Aorta (tissue), 5 donors: ENCODE measurements at regions of chr17 and their contacts with region 1.

Region 1: DNA sequence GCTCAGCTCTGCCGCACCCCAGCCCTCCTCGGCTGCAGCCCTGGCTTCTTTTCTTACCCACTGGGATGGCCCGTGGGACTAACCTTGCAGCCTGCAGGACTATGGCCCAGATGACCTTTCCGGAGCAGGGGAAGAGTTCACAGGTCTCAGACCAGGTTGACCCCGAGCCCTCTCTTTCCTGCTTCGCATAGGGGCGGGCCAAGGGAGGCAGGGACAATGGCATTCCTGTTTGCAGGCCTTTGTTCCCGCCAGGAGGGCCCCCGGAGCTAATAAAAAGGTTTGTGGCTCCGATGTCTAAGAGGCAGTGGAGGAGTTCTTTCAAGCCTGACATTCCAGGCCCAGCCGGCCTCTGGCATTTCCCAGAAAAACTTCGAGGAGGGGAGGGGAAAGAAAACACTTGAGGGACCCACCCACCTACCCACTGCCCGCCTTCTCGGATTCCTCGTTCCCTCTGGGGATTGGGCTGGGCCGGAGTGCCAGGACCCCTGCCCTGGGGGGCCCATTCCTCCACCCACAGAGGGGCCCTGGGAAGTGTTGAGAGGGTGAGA is 5.8 kb upstream of the SOCS3 start:
- DNase-seq: no peak
- ATAC-seq: no peak
- H3K4me3 ChIP-seq: no peak overlapping the region
- H3K27ac ChIP-seq: no peak overlapping the region
- H3K4me1 ChIP-seq: no peaks in the 10 kb centered on the region
- H3K27me3 ChIP-seq: no peaks in the 10 kb centered on the region

Region 2: GRCh38 chr17:78289802-78290363 is 75.8 kb before region 1 on chr17:
- intact Hi-C with region 1: loop called in 1 of 2 experiments (anchors 5 kb)
- DNase-seq: peak; percentile 88 to 91
- ATAC-seq: peak; percentile 90
- H3K4me3 ChIP-seq: no peak overlapping the region
- H3K27ac ChIP-seq: no peak overlapping the region
- H3K4me1 ChIP-seq: no peaks in the 10 kb centered on the region
- H3K27me3 ChIP-seq: no peaks in the 10 kb centered on the region